Mammary epithelial cell (primary cell): ENCODE measurements at regions of chr16 and their contacts with region 1.

Region 1: GRCh38 chr16:4271176-4272066 is 1.4 kb downstream of the TFAP4 start:
- DNase-seq: peak; percentile 86
- H3K4me3 ChIP-seq: peak overlapping the region; percentile 69 to 89 (median 74)
- H3K27ac ChIP-seq: peak overlapping the region; percentile 65
- H3K4me1 ChIP-seq: peaks cover 20% of the 10 kb centered on the region
- H3K27me3 ChIP-seq: no peaks in the 10 kb centered on the region
- CTCF ChIP-seq: no peak

Region 2: GRCh38 chr16:4288148-4288921 is 16.9 kb after region 1 on chr16:
- CTCF ChIA-PET with region 1: interaction called, 4 read pairs
- dilution Hi-C with region 1: no loop called
- in situ Hi-C with region 1: no loop called
- intact Hi-C with region 1: loop called (anchors 2 kb)
- DNase-seq: peak; percentile 84
- H3K4me3 ChIP-seq: no peak overlapping the region
- H3K27ac ChIP-seq: no peak overlapping the region
- H3K4me1 ChIP-seq: peaks cover 25% of the 10 kb centered on the region
- H3K27me3 ChIP-seq: no peaks in the 10 kb centered on the region
- CTCF ChIP-seq: peak; percentile 52 to 91

Region 3: GRCh38 chr16:4315186-4316109 is 44.0 kb after region 1 on chr16 and contains the start of gene GLIS2:
- CTCF ChIA-PET with region 1: interaction called, 3 read pairs
- dilution Hi-C with region 1: no loop called
- in situ Hi-C with region 1: loop called in 1 of 2 experiments (anchors 5 kb)
- intact Hi-C with region 1: loop called (anchors 1 kb)
- DNase-seq: peak; percentile 59
- H3K4me3 ChIP-seq: peak within 1 kb of the TSS; percentile 59 to 81 (median 64)
- H3K27ac ChIP-seq: peak within 1 kb of the TSS; percentile 29
- H3K4me1 ChIP-seq: peaks cover 40% of the 10 kb centered on the region
- H3K27me3 ChIP-seq: no peaks in the 10 kb centered on the region
- CTCF ChIP-seq: no peak
- total RNA-seq, gene GLIS2: 3.3 to 13.5 TPM

Region 4: GRCh38 chr16:4350787-4351659 is 79.6 kb after region 1 on chr16 and contains the start of gene PAM16:
- CTCF ChIA-PET with region 1: interaction called, 11 read pairs
- dilution Hi-C with region 1: no loop called
- in situ Hi-C with region 1: no loop called
- intact Hi-C with region 1: no loop called
- DNase-seq: peak; percentile 86
- H3K4me3 ChIP-seq: peak within 1 kb of the TSS; percentile 41 to 96 (median 72)
- H3K27ac ChIP-seq: peak within 1 kb of the TSS; percentile 46
- H3K4me1 ChIP-seq: peaks cover 5% of the 10 kb centered on the region
- H3K27me3 ChIP-seq: no peaks in the 10 kb centered on the region
- CTCF ChIP-seq: peak in 1 of 2 donors; percentile 19
- total RNA-seq, gene PAM16: 20.3 to 62.1 TPM

Region 5: GRCh38 chr16:4538350-4539235 is 267.2 kb after region 1 on chr16 and contains the start of gene CDIP1:
- CTCF ChIA-PET with region 1: no interaction called
- dilution Hi-C with region 1: no loop called
- in situ Hi-C with region 1: no loop called
- intact Hi-C with region 1: loop called (anchors 5 kb)
- DNase-seq: peak; percentile 95
- H3K4me3 ChIP-seq: peak within 1 kb of the TSS; percentile 80 to 84 (median 82)
- H3K27ac ChIP-seq: peak within 1 kb of the TSS; percentile 37
- H3K4me1 ChIP-seq: peaks cover 14% of the 10 kb centered on the region
- H3K27me3 ChIP-seq: no peaks in the 10 kb centered on the region
- CTCF ChIP-seq: peak in 1 of 2 donors; percentile 31
- total RNA-seq, gene CDIP1: 63.3 to 81.8 TPM